ENCODE measurements at regions of chr16 and their contacts with region 1.

Region 1: DNA sequence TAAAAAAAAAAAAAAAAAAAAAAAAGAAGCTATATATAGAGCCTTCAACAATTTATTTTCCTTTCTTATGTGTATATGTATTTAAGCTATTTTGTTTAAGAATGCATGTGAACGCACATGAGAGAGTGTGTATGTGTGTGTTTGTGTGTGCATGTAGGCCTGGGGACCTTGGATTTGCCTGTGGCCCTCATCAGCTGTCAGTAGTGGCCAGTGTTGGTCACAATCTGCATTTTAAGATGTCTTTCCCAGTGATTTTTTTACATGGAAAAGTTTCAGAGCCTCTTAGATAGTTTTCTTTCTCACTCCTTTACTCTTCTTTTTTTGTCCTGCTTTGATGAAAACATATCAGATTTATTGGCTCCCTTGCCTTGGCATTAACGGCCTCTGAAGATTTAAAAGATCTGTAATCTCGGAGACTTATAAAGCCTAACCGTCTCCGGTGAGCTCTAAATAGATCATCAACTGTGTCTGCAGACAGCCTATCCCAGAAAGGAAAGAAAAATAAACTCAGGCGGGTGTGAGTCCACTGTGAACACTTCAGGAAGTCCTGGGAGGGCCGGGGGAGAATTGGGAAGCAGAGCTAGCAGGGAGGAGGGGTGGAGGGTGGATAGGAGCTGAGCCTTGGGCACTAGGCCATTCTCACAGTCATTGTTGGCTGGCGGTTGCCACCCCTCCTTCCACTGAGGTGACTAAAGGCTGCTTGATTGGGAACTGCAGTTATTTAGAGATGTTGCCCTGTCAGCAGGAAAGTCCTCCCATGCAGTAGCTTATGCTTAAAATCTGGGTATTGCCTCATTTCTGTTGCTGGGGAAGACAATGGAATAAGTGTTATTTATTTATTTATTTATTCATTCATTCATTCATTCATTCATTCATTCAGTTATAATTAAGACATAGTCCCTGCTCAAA is 86.8 kb downstream of the WWP2 start:
- DNase-seq: peak; percentile 93
- H3K4me3 ChIP-seq: no peak overlapping the region
- H3K27ac ChIP-seq: peak overlapping the region; percentile 72 to 86 (median 78)
- H3K4me1 ChIP-seq: peaks cover 0 to 44% (median 32%) of the 10 kb centered on the region in 4 donors
- H3K27me3 ChIP-seq: no peaks in the 10 kb centered on the region
- CTCF ChIP-seq: no peak
- EP300 ChIP-seq: peak in 1 of 4 donors; percentile 14
- POLR2A ChIP-seq: no peak

Region 2: DNA sequence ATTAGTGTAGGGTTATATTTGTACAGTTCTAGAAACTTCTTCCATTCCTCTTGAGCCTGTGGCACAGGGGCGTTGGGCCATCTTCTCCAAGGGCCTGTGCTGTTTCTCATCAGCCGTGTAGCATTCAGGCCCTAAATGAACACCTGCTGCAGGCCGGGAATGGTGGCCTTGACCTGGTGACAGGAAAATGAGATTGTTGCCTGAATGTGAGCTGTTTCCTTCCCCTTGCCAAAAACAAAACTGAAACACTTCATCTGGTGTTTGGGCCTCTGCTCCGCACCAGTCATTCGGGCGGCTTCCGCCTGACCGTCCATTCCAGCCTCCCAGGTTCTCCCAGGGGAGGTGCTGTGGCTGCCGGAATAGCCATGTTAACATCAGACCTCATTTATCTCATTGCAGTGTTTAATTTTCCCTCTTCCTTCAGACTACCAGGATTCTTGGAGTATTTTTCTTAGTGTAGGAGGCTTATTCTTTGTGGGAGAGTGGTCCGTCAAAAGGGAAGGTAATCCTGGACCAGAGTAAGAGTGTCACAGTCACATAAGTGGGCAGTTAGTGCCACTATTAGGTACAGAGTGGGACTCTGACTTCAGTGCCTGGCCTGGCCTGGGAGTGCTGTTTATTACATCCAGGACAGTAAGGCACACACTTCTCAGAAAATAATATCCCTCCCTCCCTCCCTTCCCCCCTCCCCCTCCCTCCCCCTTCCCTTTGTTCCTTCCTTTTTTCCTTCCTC is 24.9 kb before region 1 on chr16:
- intact Hi-C with region 1: no loop called
- DNase-seq: peak; percentile 85
- H3K4me3 ChIP-seq: no peak overlapping the region
- H3K27ac ChIP-seq: peak overlapping the region; percentile 40 to 64 (median 58)
- H3K4me1 ChIP-seq: peaks cover 0 to 6% (median 0%) of the 10 kb centered on the region in 4 donors
- H3K27me3 ChIP-seq: no peaks in the 10 kb centered on the region
- CTCF ChIP-seq: no peak
- EP300 ChIP-seq: no peak
- POLR2A ChIP-seq: no peak

Region 3: DNA sequence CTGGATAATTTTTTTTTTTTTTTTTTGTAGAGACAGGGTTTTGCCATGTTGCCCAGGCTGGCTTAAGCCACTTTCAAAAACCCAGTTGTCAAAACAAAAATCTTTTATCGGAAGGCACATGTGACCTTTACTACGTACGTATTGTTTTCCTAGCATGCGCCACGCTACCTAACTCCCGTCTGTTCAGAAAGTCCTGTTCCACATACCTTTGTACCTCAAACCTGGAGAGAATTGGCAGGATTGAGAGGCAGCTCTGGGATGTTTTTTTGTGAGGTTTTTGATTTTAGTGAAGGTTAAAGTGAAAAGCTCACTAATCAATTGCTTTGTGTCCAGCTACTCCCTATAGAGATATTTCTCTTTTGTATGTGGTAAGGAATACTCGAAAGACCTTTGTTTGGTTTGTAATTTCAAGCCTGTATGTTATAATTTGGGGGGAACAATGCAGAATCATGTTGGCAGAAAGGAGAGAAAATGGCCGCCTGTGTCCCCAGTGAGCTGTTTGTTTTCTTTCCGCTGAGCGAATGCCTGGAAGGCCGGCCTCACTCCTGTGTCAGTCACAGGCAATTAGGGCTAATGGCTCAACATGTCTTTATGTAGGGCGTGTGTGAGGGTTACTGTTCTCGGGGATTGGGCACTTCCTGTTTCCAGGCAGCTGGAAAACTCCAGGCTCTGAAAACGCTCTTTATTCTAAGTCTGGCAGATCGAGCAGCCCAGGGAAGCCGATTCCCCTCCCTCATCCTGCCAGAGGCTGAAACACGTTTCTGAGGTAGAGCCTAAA is 41.4 kb after region 1 on chr16:
- intact Hi-C with region 1: loop called (anchors 2 kb)
- DNase-seq: peak; percentile 80
- H3K4me3 ChIP-seq: peak overlapping the region in 2 of 4 donors; percentile 15
- H3K27ac ChIP-seq: peak overlapping the region; percentile 77 to 86 (median 84)
- H3K4me1 ChIP-seq: peaks cover 0 to 21% (median 19%) of the 10 kb centered on the region in 4 donors
- H3K27me3 ChIP-seq: no peaks in the 10 kb centered on the region
- CTCF ChIP-seq: no peak
- EP300 ChIP-seq: no peak
- POLR2A ChIP-seq: no peak

Measured in sigmoid colon (tissue), 7 donors.